Activated B cell treated with CpG ODN at 0.5 μM for 24 hours (primary cell): ENCODE measurements at regions of chr11 and their contacts with region 1.

Region 1: DNA sequence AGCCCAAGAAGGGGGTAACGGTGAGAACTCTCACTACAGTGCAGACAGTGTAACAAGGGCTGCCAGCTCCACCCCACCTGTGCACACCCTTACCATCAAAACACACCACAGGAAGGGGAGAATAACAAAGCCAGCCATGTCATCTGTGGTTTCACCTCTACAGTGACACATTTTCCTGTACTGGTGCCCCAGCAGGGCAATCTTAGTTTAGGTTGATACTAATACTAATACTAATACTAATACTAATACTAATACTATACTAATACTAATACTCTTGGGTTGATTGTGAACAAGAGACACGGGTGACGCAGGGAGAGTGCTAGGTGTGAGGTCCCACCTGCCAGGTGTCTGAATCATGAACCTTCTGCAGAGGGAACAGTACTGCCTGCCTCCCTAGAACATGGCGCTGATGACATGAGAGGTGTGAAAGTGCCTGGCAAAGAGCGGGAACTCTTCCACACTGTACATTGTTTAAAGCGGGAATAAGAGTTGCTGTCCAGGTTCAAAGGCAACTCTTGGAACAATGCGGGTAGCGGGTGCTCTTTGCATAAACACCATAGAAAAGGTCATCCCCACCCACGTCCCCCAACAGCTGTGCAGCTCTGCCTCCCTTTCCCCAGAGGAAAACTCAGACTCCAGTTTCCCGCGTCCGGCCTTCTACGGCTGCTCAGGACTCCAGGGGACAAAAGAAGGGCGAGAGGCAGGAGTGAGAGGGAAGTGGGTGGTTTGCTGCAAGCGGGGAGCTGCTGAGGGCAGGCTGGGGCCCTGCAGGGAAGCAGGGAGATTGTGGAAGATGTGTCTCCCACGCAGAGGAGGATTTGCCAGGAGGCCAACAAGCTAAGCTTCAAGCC is 25.0 kb upstream of the TMPRSS4 start:
- DNase-seq: no peak
- ATAC-seq: peak; percentile 77
- H3K4me3 Mint-ChIP-seq: peak overlapping the region; percentile 5
- H3K27ac Mint-ChIP-seq: peak overlapping the region; percentile 70
- H3K4me1 Mint-ChIP-seq: peaks cover 44% of the 10 kb centered on the region
- H3K27me3 Mint-ChIP-seq: no peaks in the 10 kb centered on the region
- CTCF ChIP-seq: no peak

Region 2: DNA sequence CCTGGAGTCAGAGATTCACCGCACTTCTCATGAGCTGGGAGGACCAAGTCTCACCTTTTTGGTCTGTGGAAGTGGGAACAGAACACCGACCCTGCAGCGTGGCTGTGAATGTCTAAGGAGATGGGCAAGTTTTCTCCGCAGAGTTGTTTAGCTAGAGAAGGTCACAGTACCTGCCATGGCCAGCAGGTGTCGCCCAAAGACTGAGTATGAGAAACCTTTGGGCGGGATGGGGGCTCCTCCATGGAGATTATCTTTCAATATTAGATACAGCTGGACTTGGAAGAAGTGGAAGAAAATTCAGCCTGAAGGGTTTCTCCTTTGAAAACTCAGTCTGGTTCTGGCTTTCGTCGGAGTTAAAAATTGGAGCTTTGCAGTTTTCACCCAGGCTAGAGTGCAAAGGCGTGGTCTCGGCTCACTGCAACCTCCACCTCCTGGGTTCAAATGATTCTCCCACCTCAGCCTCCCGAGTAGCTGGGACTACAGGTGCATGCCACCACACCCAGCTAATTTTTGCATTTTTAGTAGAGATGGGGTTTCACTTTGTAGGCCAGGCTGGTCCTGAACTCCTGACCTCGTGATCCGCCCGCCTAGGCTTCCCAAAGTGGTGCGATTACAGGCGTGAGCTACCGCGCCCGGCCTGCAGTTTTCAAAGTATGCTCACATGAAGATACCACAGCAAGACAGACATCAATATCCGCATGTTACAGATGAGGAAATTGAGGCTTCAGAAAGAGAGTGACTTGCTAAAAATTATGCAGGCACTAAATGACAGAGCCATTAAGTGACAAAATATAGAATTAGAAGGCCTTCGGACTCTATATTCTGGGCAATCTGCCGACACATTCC is 244.1 kb before region 1 on chr11:
- CTCF ChIA-PET with region 1: interaction called, 93 read pairs
- POLR2A ChIA-PET with region 1: interaction called, 9 read pairs
- intact Hi-C with region 1: loop called (anchors 1 kb)
- DNase-seq: peak; percentile 73
- ATAC-seq: peak; percentile 87
- H3K4me3 Mint-ChIP-seq: no peak overlapping the region
- H3K27ac Mint-ChIP-seq: peak overlapping the region; percentile 38
- H3K4me1 Mint-ChIP-seq: peaks cover 17% of the 10 kb centered on the region
- H3K27me3 Mint-ChIP-seq: peaks cover 5% of the 10 kb centered on the region
- CTCF ChIP-seq: peak; percentile 72

Region 3: DNA sequence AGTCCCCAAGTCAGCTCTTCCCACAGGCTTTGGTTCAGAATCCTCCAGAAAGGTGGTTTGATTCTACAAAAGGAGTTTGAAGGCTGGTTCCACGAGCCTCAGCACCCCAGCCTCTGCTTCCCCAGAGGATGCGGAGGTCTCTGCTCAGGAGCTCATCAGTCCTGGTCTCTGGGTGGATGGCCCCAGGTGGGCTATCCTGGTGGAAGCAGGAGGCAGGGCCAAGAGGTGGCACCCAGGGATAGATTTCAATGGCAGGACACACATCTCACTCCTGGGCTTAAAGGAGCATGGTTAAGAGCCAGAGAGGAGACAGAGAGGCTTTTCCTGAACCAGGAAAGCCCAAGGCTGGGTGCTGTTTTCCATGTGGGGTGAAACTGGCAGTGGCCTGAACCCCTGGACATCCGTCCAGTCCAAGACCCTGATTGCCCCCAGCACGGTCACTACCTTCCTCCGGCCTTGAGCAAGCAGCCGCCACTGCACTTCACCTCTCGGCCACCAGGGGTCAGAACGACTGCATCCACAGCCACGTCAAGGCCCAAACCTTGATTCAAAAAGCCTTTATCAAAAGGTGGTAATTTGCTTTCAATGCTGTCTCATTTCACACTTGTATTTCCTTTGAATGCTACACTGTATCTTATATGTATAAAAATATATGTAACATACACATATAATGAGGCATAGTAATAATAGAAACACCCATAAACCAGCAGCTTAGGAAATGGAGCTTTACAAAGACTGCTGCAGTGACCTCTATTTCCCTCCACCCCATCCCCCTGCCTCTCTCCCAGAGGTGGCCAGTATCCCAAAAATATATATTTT is 208.0 kb before region 1 on chr11:
- CTCF ChIA-PET with region 1: interaction called, 148 read pairs
- POLR2A ChIA-PET with region 1: interaction called, 15 read pairs
- intact Hi-C with region 1: loop called (anchors 1 kb)
- DNase-seq: peak; percentile 79
- ATAC-seq: peak; percentile 98
- H3K4me3 Mint-ChIP-seq: no peak overlapping the region
- H3K27ac Mint-ChIP-seq: no peak overlapping the region
- H3K4me1 Mint-ChIP-seq: no peaks in the 10 kb centered on the region
- H3K27me3 Mint-ChIP-seq: peaks cover 1% of the 10 kb centered on the region
- CTCF ChIP-seq: peak; percentile 40

Region 4: GRCh38 chr11:117979481-117980211 is 72.2 kb before region 1 on chr11:
- CTCF ChIA-PET with region 1: interaction called, 25 read pairs
- POLR2A ChIA-PET with region 1: interaction called, 111 read pairs
- intact Hi-C with region 1: no loop called
- DNase-seq: no peak
- ATAC-seq: peak; percentile 74
- H3K4me3 Mint-ChIP-seq: peak overlapping the region; percentile 64
- H3K27ac Mint-ChIP-seq: peak overlapping the region; percentile 87
- H3K4me1 Mint-ChIP-seq: peaks cover 75% of the 10 kb centered on the region
- H3K27me3 Mint-ChIP-seq: no peaks in the 10 kb centered on the region
- CTCF ChIP-seq: no peak

Region 5: GRCh38 chr11:118002541-118003423 is 49.1 kb before region 1 on chr11:
- CTCF ChIA-PET with region 1: interaction called, 40 read pairs
- POLR2A ChIA-PET with region 1: interaction called, 136 read pairs
- intact Hi-C with region 1: no loop called
- DNase-seq: no peak
- ATAC-seq: peak; percentile 21
- H3K4me3 Mint-ChIP-seq: peak overlapping the region; percentile 52
- H3K27ac Mint-ChIP-seq: peak overlapping the region; percentile 98
- H3K4me1 Mint-ChIP-seq: peaks cover 93% of the 10 kb centered on the region
- H3K27me3 Mint-ChIP-seq: no peaks in the 10 kb centered on the region
- CTCF ChIP-seq: no peak

Region 6: GRCh38 chr11:118068206-118068944 is 16.5 kb after region 1 on chr11:
- CTCF ChIA-PET with region 1: no interaction called
- POLR2A ChIA-PET with region 1: no interaction called
- intact Hi-C with region 1: no loop called
- DNase-seq: no peak
- ATAC-seq: no peak
- H3K4me3 Mint-ChIP-seq: no peak overlapping the region
- H3K27ac Mint-ChIP-seq: no peak overlapping the region
- H3K4me1 Mint-ChIP-seq: no peaks in the 10 kb centered on the region
- H3K27me3 Mint-ChIP-seq: peaks cover 22% of the 10 kb centered on the region
- CTCF ChIP-seq: no peak

Region 7: DNA sequence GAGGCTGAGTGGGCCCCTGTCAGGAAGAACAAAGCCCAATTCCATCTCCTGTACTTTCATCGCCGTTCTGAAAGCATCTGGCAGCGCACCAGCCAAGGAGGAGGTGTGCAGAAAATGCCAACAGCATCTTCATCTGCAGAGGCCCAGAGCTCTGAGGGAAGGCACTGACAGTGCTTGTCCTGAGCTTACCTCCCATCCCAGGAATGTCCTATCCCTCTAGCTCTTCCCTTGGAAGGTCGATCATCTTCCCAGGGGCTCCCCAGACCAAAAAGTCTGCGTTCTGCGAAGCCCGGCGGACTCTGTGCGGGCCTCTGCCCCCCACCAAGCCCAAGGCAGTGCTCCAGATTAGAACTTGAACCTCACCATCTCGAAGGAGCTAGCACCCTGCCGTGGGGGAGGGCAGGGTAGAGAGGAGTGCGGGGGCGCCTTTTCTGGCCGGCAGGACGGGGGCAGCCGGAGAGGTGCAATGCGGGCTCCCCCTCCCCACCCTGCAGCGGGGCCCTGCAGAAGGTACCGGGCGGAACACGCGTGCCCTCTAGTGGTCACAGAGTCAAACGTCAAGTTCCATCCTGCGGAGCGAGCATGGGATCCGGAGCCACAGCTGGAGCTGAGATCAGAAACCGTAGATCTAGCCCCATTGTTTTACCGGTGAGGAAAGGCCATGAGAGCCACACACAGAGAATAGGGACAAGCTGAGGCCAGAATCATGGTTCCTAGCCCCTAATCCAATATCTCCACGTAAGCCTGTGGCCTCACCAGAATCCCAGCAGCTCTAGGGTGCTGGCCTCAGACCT is 119.6 kb after region 1 on chr11:
- CTCF ChIA-PET with region 1: interaction called, 10 read pairs
- POLR2A ChIA-PET with region 1: no interaction called
- intact Hi-C with region 1: loop called (anchors 5 kb)
- DNase-seq: peak; percentile 58
- ATAC-seq: peak; percentile 86
- H3K4me3 Mint-ChIP-seq: no peak overlapping the region
- H3K27ac Mint-ChIP-seq: no peak overlapping the region
- H3K4me1 Mint-ChIP-seq: no peaks in the 10 kb centered on the region
- H3K27me3 Mint-ChIP-seq: peaks cover 34% of the 10 kb centered on the region
- CTCF ChIP-seq: peak; percentile 81